ENCODE measurements at regions of chr17 and their contacts with region 1.

Region 1: DNA sequence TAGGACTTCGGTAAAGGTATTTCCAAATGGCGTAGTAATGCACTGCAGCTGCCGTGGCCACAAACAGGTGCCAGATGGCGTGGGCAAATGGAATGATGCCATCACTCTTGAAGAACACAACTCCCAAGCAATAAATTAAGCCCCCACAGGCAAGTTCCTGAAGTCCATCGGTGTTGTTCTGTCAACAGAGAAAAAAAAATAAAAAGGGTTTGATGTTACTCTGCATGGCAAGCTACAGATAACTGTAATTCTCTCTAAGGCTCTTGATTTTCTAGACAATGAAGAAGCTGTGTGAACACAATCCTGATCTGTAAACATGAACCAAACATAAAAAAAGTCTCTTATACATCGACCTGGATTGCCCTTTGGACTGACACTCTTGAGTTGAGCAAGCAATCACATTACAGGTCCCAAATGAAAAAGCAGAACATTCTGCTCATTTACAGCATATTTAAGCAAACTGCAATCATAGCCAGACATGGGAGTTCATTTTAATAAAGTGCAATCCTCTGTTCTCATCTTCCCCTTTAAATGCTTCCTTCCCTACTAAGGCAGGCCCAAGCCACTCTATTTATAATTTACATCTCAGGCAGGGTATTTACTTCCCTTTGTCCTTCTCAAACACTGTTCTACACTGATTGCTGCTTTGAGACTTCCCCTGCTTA is 27.1 kb downstream of the MMD start:
- DNase-seq: no peak
- ATAC-seq: peak in 3 of 4 donors; percentile 50 to 82 (median 73)
- H3K4me3 ChIP-seq: no peak overlapping the region
- H3K27ac ChIP-seq: peak overlapping the region in 2 of 12 donors; percentile 20 to 73
- H3K4me1 ChIP-seq: peaks cover 0 to 26% (median 0%) of the 10 kb centered on the region in 12 donors
- H3K27me3 ChIP-seq: no peaks in the 10 kb centered on the region
- CTCF ChIP-seq: no peak
- POLR2A ChIP-seq: no peak

Region 2: DNA sequence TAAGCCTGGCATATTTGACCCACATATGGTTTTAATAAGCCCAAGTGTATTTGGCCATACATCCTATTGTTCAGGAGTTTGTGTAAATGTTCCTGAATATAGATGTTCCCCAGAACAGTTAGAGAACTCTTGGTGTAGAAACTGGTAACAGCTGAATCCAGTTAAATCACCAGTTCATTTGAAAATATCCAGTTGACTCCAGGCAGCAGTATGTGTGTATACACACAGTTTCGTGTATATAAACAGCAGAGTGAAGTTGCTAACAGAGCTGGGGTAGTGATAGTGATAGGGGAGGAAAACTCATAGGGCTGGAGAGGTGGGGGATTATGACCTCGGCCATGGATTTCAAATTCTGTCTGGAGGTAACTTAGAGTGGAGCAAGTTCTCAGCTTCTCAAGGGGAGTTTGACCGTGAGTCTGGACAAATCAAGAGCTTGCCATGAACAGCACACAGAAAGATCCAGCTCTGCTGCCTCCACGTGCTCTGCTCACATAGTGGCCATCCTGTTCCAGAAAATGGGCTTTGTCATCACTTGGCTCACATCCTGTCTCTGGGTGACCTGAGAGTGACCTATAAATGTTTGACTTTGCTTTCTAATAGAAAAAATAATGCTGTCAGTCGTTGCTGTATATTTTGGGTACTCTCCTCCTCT is 57.8 kb after region 1 on chr17:
- intact Hi-C with region 1: loop called in 1 of 10 experiments (anchors 10 kb)
- DNase-seq: peak in 4 of 5 donors; percentile 16 to 67 (median 40)
- ATAC-seq: peak; percentile 69 to 95 (median 90)
- H3K4me3 ChIP-seq: no peak overlapping the region
- H3K27ac ChIP-seq: peak overlapping the region in 3 of 12 donors; percentile 14 to 78 (median 61)
- H3K4me1 ChIP-seq: peaks cover 0 to 25% (median 5%) of the 10 kb centered on the region in 12 donors
- H3K27me3 ChIP-seq: no peaks in the 10 kb centered on the region
- CTCF ChIP-seq: no peak
- POLR2A ChIP-seq: no peak